Right lobe of liver (tissue), 6 donors: ENCODE measurements at regions of chr6 and their contacts with region 1.

Region 1: DNA sequence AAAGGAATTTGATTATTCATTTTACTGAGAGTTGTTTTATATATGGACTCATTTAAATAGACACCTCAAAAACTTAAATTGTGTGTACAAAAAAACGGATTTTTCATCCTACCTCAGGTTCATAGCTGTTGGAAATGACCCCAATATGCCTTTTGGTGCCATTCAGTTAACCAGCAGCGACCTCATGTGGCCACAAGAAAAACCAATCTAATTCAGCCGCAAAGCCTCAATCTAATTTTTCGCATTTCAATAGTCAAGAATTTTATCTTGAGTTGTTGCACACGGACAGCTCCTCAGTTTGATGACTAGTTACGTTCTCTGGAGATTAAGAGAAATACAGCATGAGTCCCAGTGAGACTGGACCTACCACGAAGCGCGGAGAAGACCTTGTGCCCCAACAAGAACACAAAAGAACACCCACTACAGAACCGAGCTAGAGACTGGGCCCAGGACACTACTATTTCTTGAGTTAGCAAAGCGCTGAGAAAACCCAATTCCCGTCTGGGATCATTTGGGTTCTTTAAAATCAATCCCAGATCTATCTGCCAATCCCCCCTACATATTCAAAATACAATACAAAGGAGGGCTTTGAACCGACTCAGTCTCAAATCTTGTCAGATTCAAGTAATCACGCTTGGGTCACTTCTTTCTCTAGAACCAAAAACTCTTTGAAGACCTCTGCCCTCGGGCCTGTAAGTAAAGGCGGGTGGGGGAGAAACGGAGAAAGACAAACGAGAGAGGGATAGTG is 1.1 kb downstream of the TCP11 start:
- DNase-seq: peak in 2 of 3 donors; percentile 29 to 56
- ATAC-seq: peak; percentile 74 to 87 (median 79)
- H3K4me3 ChIP-seq: no peak overlapping the region
- H3K27ac ChIP-seq: peak overlapping the region in 2 of 3 donors; percentile 75 to 78
- H3K4me1 ChIP-seq: peaks cover 0 to 6% (median 0%) of the 10 kb centered on the region in 4 donors
- H3K27me3 ChIP-seq: no peaks in the 10 kb centered on the region
- CTCF ChIP-seq: peak; percentile 79 to 94 (median 84)
- POLR2A ChIP-seq: no peak

Region 2: DNA sequence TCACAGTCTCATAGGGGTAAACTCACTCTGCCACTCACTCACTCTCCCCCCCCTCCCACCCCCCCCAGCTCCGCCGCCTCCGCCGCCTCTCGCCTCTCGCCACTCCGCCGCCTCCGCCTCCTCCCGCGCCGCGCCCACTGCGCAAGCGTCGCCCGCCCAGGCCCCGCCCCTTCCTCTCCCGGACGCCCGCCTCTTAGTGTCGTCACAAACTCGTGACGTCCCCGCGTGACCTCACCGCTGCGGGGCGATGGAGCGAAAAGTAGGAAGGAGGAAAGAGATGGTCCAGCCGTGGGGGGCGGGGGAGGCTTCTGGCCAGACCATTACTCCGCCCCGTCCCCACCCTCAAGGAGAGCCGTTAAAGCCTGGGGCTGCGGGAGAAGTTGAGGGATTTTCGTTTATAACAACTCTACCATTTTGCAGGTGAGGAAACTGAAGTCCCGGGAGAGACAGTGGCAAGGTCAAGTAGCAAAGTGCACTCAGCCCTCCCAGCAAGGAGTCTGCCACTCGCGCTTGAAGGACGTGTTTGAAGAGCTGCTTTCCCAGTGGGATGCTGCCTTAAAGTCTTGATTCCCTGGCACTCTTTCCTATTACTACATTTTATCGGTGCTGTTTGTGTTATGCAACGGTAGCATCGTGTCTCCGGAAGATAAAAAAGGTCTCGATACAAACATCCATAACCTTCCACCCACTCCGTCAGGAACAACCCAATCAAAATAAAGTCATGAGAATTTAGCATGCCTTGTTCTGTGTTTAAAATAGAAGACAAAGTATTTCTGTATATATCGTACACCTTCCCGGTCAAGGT is 443.1 kb before region 1 on chr6 and contains the start of gene ILRUN:
- intact Hi-C with region 1: no loop called
- DNase-seq: peak; percentile 98
- ATAC-seq: peak; percentile 87 to 94 (median 90)
- H3K4me3 ChIP-seq: peak within 1 kb of the TSS; percentile 75 to 97 (median 97)
- H3K27ac ChIP-seq: peak within 1 kb of the TSS; percentile 94 to 98 (median 95)
- H3K4me1 ChIP-seq: peaks cover 0 to 32% (median 15%) of the 10 kb centered on the region in 4 donors
- H3K27me3 ChIP-seq: no peaks in the 10 kb centered on the region
- CTCF ChIP-seq: no peak
- POLR2A ChIP-seq: peak; percentile 53
- total RNA-seq, gene ILRUN: 55.5 to 89.1 (median 67.1) TPM

Region 3: DNA sequence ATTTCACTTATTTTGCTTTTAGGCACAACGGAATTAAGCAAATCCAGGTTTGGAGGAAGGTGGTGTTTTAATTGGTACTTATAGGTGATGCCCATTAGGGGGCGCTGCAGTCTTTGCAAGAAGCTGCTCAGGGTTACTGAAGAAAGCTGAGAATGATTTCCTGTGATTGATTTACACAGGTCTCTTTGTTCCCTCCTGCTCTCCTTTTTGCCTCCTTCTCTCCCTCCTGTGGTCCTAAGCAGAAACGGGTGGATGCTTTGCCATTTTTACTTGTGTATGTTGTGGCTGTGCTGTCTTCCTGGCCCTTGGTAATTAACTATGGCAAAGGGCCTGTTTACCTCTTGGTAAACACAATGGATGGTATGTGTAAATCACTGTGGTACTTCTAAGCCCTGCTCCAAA is 153.2 kb before region 1 on chr6:
- intact Hi-C with region 1: loop called in 1 of 2 experiments (anchors 5 kb)
- DNase-seq: peak; percentile 50 to 76 (median 66)
- ATAC-seq: peak; percentile 74 to 91 (median 84)
- H3K4me3 ChIP-seq: no peak overlapping the region
- H3K27ac ChIP-seq: no peak overlapping the region
- H3K4me1 ChIP-seq: peaks cover 0 to 10% (median 4%) of the 10 kb centered on the region in 4 donors
- H3K27me3 ChIP-seq: no peaks in the 10 kb centered on the region
- CTCF ChIP-seq: peak; percentile 83 to 90 (median 90)
- POLR2A ChIP-seq: no peak

Region 4: GRCh38 chr6:35202066-35202546 is 62.0 kb after region 1 on chr6:
- intact Hi-C with region 1: loop called in 1 of 2 experiments (anchors 10 kb)
- DNase-seq: no peak
- ATAC-seq: no peak
- H3K4me3 ChIP-seq: no peak overlapping the region
- H3K27ac ChIP-seq: no peak overlapping the region
- H3K4me1 ChIP-seq: no peaks in the 10 kb centered on the region
- H3K27me3 ChIP-seq: no peaks in the 10 kb centered on the region
- CTCF ChIP-seq: no peak
- POLR2A ChIP-seq: no peak